ENCODE measurements at regions of chr2 and their contacts with region 1.

Region 1: GRCh38 chr2:138104071-138104470 is 139.8 kb downstream of the HNMT start:
- H3K4me3 Mint-ChIP-seq: no peak overlapping the region
- H3K27ac Mint-ChIP-seq: no peak overlapping the region
- H3K4me1 Mint-ChIP-seq: no peaks in the 10 kb centered on the region
- H3K27me3 Mint-ChIP-seq: no peaks in the 10 kb centered on the region

Region 2: GRCh38 chr2:138794734-138795133 is 690.7 kb after region 1 on chr2:
- intact Hi-C with region 1: loop called (anchors 5 kb)
- H3K4me3 Mint-ChIP-seq: no peak overlapping the region
- H3K27ac Mint-ChIP-seq: no peak overlapping the region
- H3K4me1 Mint-ChIP-seq: no peaks in the 10 kb centered on the region
- H3K27me3 Mint-ChIP-seq: no peaks in the 10 kb centered on the region

Measured in dendritic cell treated with granulocyte-macrophage colony-stimulating factor and Interleukin-4, amounts not matched to agents 40 ng/mL and 50 ng/mL, for 4 days (primary cell).